Activated CD4-positive, alpha-beta T cell treated with anti-CD3 and anti-CD28 coated beads for 36 hours (primary cell): ENCODE measurements at regions of chr18 and their contacts with region 1.

Region 1: GRCh38 chr18:28588884-28589549 is 412.1 kb upstream of the CDH2 start:
- DNase-seq: no peak
- ATAC-seq: no peak
- H3K4me3 Mint-ChIP-seq: no peak overlapping the region
- H3K27ac Mint-ChIP-seq: no peak overlapping the region
- H3K4me1 Mint-ChIP-seq: no peaks in the 10 kb centered on the region
- H3K27me3 Mint-ChIP-seq: no peaks in the 10 kb centered on the region

Region 2: GRCh38 chr18:28635530-28635929 is 46.5 kb after region 1 on chr18:
- CTCF ChIA-PET with region 1: no interaction called
- POLR2A ChIA-PET with region 1: no interaction called
- intact Hi-C with region 1: loop called in 1 of 2 experiments (anchors 1 kb)
- DNase-seq: no peak
- ATAC-seq: no peak
- H3K4me3 Mint-ChIP-seq: no peak overlapping the region
- H3K27ac Mint-ChIP-seq: no peak overlapping the region
- H3K4me1 Mint-ChIP-seq: no peaks in the 10 kb centered on the region
- H3K27me3 Mint-ChIP-seq: no peaks in the 10 kb centered on the region

Region 3: GRCh38 chr18:28712796-28713425 is 123.9 kb after region 1 on chr18:
- CTCF ChIA-PET with region 1: no interaction called
- POLR2A ChIA-PET with region 1: no interaction called
- intact Hi-C with region 1: no loop called
- DNase-seq: no peak
- ATAC-seq: no peak
- H3K4me3 Mint-ChIP-seq: no peak overlapping the region
- H3K27ac Mint-ChIP-seq: no peak overlapping the region
- H3K4me1 Mint-ChIP-seq: no peaks in the 10 kb centered on the region
- H3K27me3 Mint-ChIP-seq: no peaks in the 10 kb centered on the region